Activated CD4-positive, alpha-beta T cell treated with anti-CD3 and anti-CD28 coated beads, Interleukin-2, amount 10 ng/mL, durations not matched to agents 7 days and 5 days (primary cell): ENCODE measurements at regions of chr6 and their contacts with region 1.

Region 1: GRCh38 chr6:27132532-27133280 is 114.8 kb upstream of the PRSS16 start:
- DNase-seq: peak; percentile 94
- H3K4me3 Mint-ChIP-seq: no peak overlapping the region
- H3K27ac Mint-ChIP-seq: no peak overlapping the region
- H3K4me1 Mint-ChIP-seq: peaks cover 66% of the 10 kb centered on the region
- H3K27me3 Mint-ChIP-seq: no peaks in the 10 kb centered on the region

Region 2: GRCh38 chr6:27040244-27040981 is 92.3 kb before region 1 on chr6:
- CTCF ChIA-PET with region 1: no interaction called
- POLR2A ChIA-PET with region 1: no interaction called
- DNase-seq: no peak
- H3K4me3 Mint-ChIP-seq: no peak overlapping the region
- H3K27ac Mint-ChIP-seq: no peak overlapping the region
- H3K4me1 Mint-ChIP-seq: no peaks in the 10 kb centered on the region
- H3K27me3 Mint-ChIP-seq: peaks cover 38% of the 10 kb centered on the region

Region 3: DNA sequence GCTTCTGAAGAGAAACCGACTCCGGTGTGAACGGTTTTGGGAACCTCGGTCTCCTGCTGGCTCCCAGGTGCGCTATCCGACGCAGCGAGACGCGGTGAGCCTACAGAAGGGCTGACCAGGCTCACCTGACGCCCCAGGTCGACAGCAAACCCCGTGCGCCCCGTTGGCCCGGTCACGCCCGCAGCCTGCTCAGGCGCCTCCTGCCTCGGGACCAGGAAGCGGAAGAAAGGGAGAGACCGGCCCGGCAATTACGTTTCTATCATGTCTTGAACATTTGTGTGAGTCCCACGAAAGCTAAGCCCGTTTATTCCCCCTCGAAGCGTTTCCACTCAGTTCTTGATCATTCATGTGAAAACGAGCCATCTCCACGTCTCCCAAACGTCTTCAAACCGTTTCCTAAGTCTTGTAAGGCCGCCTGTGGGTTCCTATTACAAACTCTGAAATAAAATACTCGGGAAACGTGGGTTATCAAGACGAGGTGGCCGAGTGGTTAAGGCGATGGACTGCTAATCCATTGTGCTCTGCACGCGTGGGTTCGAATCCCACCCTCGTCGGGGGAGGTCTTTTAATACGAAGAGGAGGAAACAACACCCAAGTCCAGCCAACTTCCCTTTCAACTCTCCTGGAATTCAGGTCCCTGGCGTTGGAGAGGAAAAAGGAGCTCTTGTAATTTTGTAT is 35.7 kb before region 1 on chr6:
- CTCF ChIA-PET with region 1: no interaction called
- POLR2A ChIA-PET with region 1: no interaction called
- DNase-seq: peak; percentile 17
- H3K4me3 Mint-ChIP-seq: peak overlapping the region; percentile 67
- H3K27ac Mint-ChIP-seq: no peak overlapping the region
- H3K4me1 Mint-ChIP-seq: peaks cover 17% of the 10 kb centered on the region
- H3K27me3 Mint-ChIP-seq: peaks cover 53% of the 10 kb centered on the region

Region 4: GRCh38 chr6:27156874-27157458 is 24.3 kb after region 1 on chr6:
- CTCF ChIA-PET with region 1: interaction called, 8 read pairs
- POLR2A ChIA-PET with region 1: interaction called, 23 read pairs
- DNase-seq: no peak
- H3K4me3 Mint-ChIP-seq: peak overlapping the region; percentile 68
- H3K27ac Mint-ChIP-seq: peak overlapping the region; percentile 90
- H3K4me1 Mint-ChIP-seq: peaks cover 56% of the 10 kb centered on the region
- H3K27me3 Mint-ChIP-seq: no peaks in the 10 kb centered on the region

Region 5: GRCh38 chr6:27205375-27206278 is 72.9 kb after region 1 on chr6:
- CTCF ChIA-PET with region 1: no interaction called
- POLR2A ChIA-PET with region 1: no interaction called
- DNase-seq: peak; percentile 56
- H3K4me3 Mint-ChIP-seq: peak overlapping the region; percentile 61
- H3K27ac Mint-ChIP-seq: no peak overlapping the region
- H3K4me1 Mint-ChIP-seq: peaks cover 31% of the 10 kb centered on the region
- H3K27me3 Mint-ChIP-seq: peaks cover 22% of the 10 kb centered on the region

Region 6: GRCh38 chr6:27251606-27252251 is 119.0 kb after region 1 on chr6:
- CTCF ChIA-PET with region 1: interaction called, 3 read pairs
- POLR2A ChIA-PET with region 1: interaction called, 10 read pairs
- DNase-seq: peak; percentile 64
- H3K4me3 Mint-ChIP-seq: peak overlapping the region; percentile 79
- H3K27ac Mint-ChIP-seq: no peak overlapping the region
- H3K4me1 Mint-ChIP-seq: peaks cover 17% of the 10 kb centered on the region
- H3K27me3 Mint-ChIP-seq: peaks cover 62% of the 10 kb centered on the region

Region 7: DNA sequence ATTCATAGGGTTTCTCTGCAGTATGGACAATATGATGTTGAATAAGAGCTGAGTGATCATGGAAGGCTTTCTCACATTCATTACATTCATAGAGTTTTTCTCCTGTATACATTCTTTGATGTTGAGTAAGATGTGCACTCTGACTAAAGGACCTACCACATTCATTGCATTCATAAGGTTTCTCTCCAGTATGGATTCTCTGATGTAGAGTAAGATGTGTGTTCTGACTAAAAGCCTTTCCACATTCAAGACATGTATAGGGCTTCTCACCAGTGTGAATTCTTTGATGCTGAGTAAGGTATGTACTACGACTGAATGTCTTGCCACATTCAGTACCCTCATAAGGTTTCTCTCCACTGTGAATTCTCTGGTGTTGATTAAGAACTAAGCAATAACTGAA is 226.5 kb after region 1 on chr6:
- CTCF ChIA-PET with region 1: no interaction called
- POLR2A ChIA-PET with region 1: no interaction called
- DNase-seq: no peak
- H3K4me3 Mint-ChIP-seq: no peak overlapping the region
- H3K27ac Mint-ChIP-seq: no peak overlapping the region
- H3K4me1 Mint-ChIP-seq: no peaks in the 10 kb centered on the region
- H3K27me3 Mint-ChIP-seq: peaks cover 2% of the 10 kb centered on the region